ENCODE measurements at regions of chr13 and their contacts with region 1.

Region 1: GRCh38 chr13:51286135-51287002 is 53.1 kb upstream of the SERPINE3 start:
- DNase-seq: peak; percentile 84 to 88
- H3K4me3 ChIP-seq: no peak overlapping the region
- H3K27ac ChIP-seq: no peak overlapping the region
- H3K4me1 ChIP-seq: no peaks in the 10 kb centered on the region
- H3K27me3 ChIP-seq: no peaks in the 10 kb centered on the region
- CTCF ChIP-seq: peak; percentile 54 to 93 (median 88)
- POLR2A ChIP-seq: no peak

Region 2: DNA sequence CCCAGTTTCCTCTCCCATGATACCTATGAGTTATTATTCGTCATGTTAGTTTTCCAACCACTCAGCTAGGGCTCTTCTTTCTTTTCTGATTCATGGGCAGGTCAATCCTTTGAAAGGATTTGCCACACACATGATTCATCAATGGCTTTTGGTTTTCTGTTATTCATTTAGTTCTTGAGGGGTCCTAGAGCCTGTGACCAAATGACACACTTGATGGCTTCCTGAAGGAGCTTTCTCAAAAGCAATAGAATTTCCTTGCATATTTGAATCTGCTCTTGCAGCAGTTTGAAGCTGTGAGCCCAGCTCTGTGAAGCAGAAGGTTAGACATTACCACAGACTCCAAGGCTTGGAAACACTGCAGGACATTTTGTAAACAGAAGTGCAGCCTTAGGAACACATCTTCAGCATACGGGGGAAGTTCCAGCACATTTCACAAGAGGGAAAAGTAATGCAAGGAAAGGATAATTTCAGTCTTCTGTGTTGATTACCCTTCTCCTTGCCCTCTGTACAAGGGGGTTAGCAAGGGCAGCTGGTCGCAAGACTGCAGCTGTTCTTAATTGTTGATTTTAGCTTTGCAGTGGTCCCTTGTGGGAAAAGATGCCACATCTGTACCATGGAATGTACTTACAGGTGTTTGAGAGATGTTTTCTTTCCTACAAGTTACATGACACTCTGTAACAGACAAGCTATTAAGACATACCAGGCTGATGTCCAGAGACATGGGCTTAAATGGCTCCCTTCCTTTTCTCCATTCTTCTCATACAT is 932.5 kb before region 1 on chr13:
- intact Hi-C with region 1: no loop called
- DNase-seq: peak; percentile 35 to 42
- H3K4me3 ChIP-seq: no peak overlapping the region
- H3K27ac ChIP-seq: peak overlapping the region in 2 of 3 donors; percentile 32 to 33
- H3K4me1 ChIP-seq: peaks cover 31 to 38% of the 10 kb centered on the region in 2 donors
- H3K27me3 ChIP-seq: no peaks in the 10 kb centered on the region
- CTCF ChIP-seq: no peak
- POLR2A ChIP-seq: no peak

Region 3: GRCh38 chr13:51134763-51135365 is 151.5 kb before region 1 on chr13:
- intact Hi-C with region 1: loop called (anchors 5 kb)
- DNase-seq: no peak
- H3K4me3 ChIP-seq: no peak overlapping the region
- H3K27ac ChIP-seq: no peak overlapping the region
- H3K4me1 ChIP-seq: peaks cover 0 to 4% of the 10 kb centered on the region in 2 donors
- H3K27me3 ChIP-seq: no peaks in the 10 kb centered on the region
- CTCF ChIP-seq: no peak
- POLR2A ChIP-seq: no peak

Region 4: GRCh38 chr13:51148952-51149573 is 137.3 kb before region 1 on chr13:
- intact Hi-C with region 1: loop called (anchors 5 kb)
- DNase-seq: peak; percentile 54 to 66
- H3K4me3 ChIP-seq: no peak overlapping the region
- H3K27ac ChIP-seq: no peak overlapping the region
- H3K4me1 ChIP-seq: no peaks in the 10 kb centered on the region
- H3K27me3 ChIP-seq: no peaks in the 10 kb centered on the region
- CTCF ChIP-seq: peak; percentile 19 to 83 (median 71)
- POLR2A ChIP-seq: no peak

Region 5: DNA sequence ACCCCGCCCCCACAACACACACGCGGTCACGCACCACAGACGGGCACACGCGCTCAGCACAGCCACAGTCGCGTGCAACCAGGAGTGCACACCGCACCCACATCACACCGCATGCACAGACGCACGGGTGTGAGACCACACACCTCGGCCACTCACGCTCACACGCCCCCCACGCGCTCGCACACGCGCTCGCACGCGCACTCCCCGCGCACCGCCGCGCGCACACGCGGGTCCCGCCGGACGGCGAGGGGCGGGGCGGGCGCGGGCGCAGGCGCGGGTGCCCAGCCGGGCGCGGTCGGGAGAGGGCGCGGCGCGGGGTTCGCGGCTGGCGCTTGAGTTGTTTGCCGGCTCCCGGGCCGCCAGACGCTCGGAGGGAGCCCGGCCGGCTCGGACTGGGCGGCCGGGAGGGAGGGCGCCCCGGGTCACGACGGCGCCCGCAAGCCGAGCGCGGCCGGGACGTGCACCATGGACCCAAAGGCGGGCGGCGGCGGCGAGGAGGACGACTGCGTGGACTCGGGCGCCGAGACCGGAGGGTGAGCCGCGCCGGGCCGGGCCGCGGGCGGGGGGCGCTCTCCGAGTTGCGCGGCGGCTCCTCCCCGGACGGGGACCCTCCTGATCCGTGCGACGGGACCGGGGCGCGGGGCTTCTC is 64.2 kb before region 1 on chr13 and contains the start of gene FAM124A:
- intact Hi-C with region 1: loop called (anchors 5 kb)
- DNase-seq: peak; percentile 54 to 62
- H3K4me3 ChIP-seq: peak within 1 kb of the TSS; percentile 13 to 82 (median 69)
- H3K27ac ChIP-seq: peak within 1 kb of the TSS in 2 of 3 donors; percentile 45 to 57
- H3K4me1 ChIP-seq: peaks cover 6 to 28% of the 10 kb centered on the region in 2 donors
- H3K27me3 ChIP-seq: no peaks in the 10 kb centered on the region
- CTCF ChIP-seq: peak in 3 of 6 experiments; percentile 42 to 64 (median 57)
- POLR2A ChIP-seq: peak in 1 of 2 donors; percentile 72
- total RNA-seq, gene FAM124A: 9.1 to 11.4 (median 9.4) TPM

Measured in thyroid gland (tissue), 4 donors.